Activated B cell treated with CpG ODN at 0.5 μM for 24 hours (primary cell): ENCODE measurements at regions of chr3 and their contacts with region 1.

Region 1: GRCh38 chr3:48465531-48466378 is 19.2 kb downstream of the ATRIP start:
- DNase-seq: peak; percentile 86
- ATAC-seq: peak; percentile 95
- H3K4me3 Mint-ChIP-seq: peak overlapping the region; percentile 89
- H3K27ac Mint-ChIP-seq: peak overlapping the region; percentile 96
- H3K4me1 Mint-ChIP-seq: peaks cover 55% of the 10 kb centered on the region
- H3K27me3 Mint-ChIP-seq: no peaks in the 10 kb centered on the region
- CTCF ChIP-seq: no peak

Region 2: GRCh38 chr3:48248095-48248850 is 217.5 kb before region 1 on chr3:
- CTCF ChIA-PET with region 1: no interaction called
- POLR2A ChIA-PET with region 1: no interaction called
- intact Hi-C with region 1: no loop called
- DNase-seq: no peak
- ATAC-seq: no peak
- H3K4me3 Mint-ChIP-seq: no peak overlapping the region
- H3K27ac Mint-ChIP-seq: no peak overlapping the region
- H3K4me1 Mint-ChIP-seq: peaks cover 6% of the 10 kb centered on the region
- H3K27me3 Mint-ChIP-seq: no peaks in the 10 kb centered on the region
- CTCF ChIP-seq: no peak

Region 3: DNA sequence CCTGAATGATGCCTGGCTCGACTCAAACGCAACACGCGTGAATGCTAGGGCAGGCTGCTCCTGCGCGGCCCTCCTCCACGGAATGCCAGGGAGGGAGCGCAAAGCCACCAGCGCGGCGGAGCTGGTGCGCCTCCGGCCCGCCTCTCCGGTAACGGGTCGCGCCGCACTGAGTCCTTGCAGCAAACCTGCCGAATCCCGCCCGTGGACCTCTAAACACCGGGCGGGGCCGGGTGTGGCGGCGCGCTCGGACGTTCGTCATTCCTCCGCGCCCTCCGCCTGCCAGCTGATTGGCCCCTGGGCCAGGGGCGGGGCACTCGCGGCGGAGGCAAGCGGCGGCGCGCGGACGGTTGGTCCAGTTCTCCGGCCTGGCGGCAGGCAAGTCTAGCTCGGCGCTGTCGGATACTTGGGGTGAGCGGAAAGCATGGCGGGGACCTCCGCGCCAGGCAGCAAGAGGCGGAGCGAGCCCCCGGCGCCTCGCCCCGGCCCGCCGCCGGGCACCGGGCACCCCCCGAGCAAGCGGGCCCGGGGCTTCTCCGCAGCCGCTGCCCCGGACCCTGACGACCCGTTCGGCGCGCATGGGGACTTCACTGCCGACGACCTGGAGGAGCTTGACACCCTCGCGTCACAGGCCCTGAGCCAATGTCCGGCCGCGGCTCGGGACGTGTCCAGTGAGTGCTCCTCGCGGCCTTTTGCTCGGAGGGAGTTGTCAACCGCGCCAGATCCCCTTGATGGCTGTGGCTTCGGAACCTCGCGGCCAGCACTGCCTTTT is 19.1 kb before region 1 on chr3 and contains the start of gene ATRIP:
- CTCF ChIA-PET with region 1: no interaction called
- POLR2A ChIA-PET with region 1: interaction called, 24 read pairs
- intact Hi-C with region 1: loop called (anchors 1 kb)
- DNase-seq: peak; percentile 88
- ATAC-seq: peak; percentile 100
- H3K4me3 Mint-ChIP-seq: peak within 1 kb of the TSS; percentile 85
- H3K27ac Mint-ChIP-seq: peak within 1 kb of the TSS; percentile 82
- H3K4me1 Mint-ChIP-seq: peaks cover 41% of the 10 kb centered on the region
- H3K27me3 Mint-ChIP-seq: no peaks in the 10 kb centered on the region
- CTCF ChIP-seq: no peak
- total RNA-seq, gene ATRIP: 10.5 and 14.6 TPM in 2 replicates

Region 4: GRCh38 chr3:48478596-48479555 is 13.1 kb after region 1 on chr3:
- CTCF ChIA-PET with region 1: interaction called, 4 read pairs
- POLR2A ChIA-PET with region 1: interaction called, 16 read pairs
- intact Hi-C with region 1: no loop called
- DNase-seq: no peak
- ATAC-seq: peak; percentile 81
- H3K4me3 Mint-ChIP-seq: peak overlapping the region; percentile 72
- H3K27ac Mint-ChIP-seq: peak overlapping the region; percentile 97
- H3K4me1 Mint-ChIP-seq: peaks cover 50% of the 10 kb centered on the region
- H3K27me3 Mint-ChIP-seq: no peaks in the 10 kb centered on the region
- CTCF ChIP-seq: no peak

Region 5: DNA sequence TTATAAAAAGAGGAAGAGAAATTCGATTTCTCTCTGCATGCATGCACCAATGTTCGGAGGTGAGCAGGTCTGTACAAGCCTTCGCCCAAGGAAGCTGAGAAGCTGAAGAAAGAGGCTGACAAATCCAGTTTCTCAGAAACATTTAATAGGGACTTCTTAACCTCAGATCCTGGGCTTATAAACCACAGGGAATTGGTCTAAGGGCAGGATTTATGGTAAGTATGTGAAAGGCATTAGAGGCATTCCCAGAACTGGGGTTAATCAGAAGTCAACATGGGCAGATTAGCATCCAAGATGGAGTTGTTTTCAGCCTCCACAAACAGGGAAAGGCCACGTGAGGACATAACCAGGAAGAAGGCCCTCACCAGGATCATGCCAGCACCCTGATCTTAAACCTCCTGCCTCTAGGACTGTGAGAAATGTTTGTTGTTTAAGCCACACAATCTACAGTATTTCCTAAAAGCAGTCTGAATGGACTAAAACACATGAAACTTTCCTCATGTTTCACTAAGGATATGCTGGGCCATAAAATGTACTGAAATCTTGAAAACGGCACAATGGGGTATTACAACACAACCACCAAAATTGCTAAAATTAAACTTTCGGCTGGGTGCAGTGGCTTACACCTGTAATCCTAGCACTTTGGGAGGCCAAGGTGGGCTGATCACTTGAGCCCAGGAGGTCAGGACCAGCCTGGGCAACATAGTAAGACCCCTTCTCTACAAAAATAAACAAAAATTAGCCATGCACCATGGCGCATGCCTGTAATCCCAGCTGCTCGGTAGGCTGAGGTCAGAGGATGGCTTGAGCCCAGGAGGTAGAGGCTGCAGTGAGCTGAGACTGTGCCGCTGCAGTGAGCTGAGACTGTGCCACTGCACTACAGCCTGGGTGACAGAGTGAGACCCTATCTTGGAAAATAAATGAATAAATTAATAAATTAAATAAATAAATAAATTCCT is 27.1 kb after region 1 on chr3:
- CTCF ChIA-PET with region 1: no interaction called
- POLR2A ChIA-PET with region 1: interaction called, 28 read pairs
- intact Hi-C with region 1: no loop called
- DNase-seq: no peak
- ATAC-seq: peak; percentile 98
- H3K4me3 Mint-ChIP-seq: peak overlapping the region; percentile 38
- H3K27ac Mint-ChIP-seq: no peak overlapping the region
- H3K4me1 Mint-ChIP-seq: peaks cover 8% of the 10 kb centered on the region
- H3K27me3 Mint-ChIP-seq: no peaks in the 10 kb centered on the region
- CTCF ChIP-seq: no peak

Region 6: GRCh38 chr3:48548729-48549705 is 83.3 kb after region 1 on chr3:
- CTCF ChIA-PET with region 1: interaction called, 21 read pairs
- POLR2A ChIA-PET with region 1: interaction called, 6 read pairs
- intact Hi-C with region 1: loop called (anchors 1 kb)
- DNase-seq: peak; percentile 66
- ATAC-seq: peak; percentile 100
- H3K4me3 Mint-ChIP-seq: no peak overlapping the region
- H3K27ac Mint-ChIP-seq: no peak overlapping the region
- H3K4me1 Mint-ChIP-seq: no peaks in the 10 kb centered on the region
- H3K27me3 Mint-ChIP-seq: no peaks in the 10 kb centered on the region
- CTCF ChIP-seq: no peak